BJ (cell line): ENCODE measurements at regions of chr7 and their contacts with region 1.

Region 1: GRCh38 chr7:6260291-6261187 is 11.9 kb downstream of the CYTH3 start:
- DNase-seq: no peak
- H3K4me3 ChIP-seq: no peak overlapping the region
- H3K27me3 ChIP-seq: no peaks in the 10 kb centered on the region
- CTCF ChIP-seq: no peak

Region 2: GRCh38 chr7:6175645-6176044 is 84.9 kb before region 1 on chr7:
- CTCF ChIA-PET with region 1: no interaction called
- POLR2A ChIA-PET with region 1: no interaction called
- DNase-seq: peak; percentile 47
- H3K4me3 ChIP-seq: no peak overlapping the region
- H3K27me3 ChIP-seq: no peaks in the 10 kb centered on the region
- CTCF ChIP-seq: no peak

Region 3: GRCh38 chr7:6271060-6271658 is 10.6 kb after region 1 on chr7:
- CTCF ChIA-PET with region 1: interaction called, 10 read pairs
- POLR2A ChIA-PET with region 1: interaction called, 13 read pairs
- DNase-seq: no peak
- H3K4me3 ChIP-seq: peak overlapping the region; percentile 95
- H3K27me3 ChIP-seq: no peaks in the 10 kb centered on the region
- CTCF ChIP-seq: peak; percentile 66

Region 4: GRCh38 chr7:6460303-6460702 is 199.8 kb after region 1 on chr7:
- CTCF ChIA-PET with region 1: no interaction called
- POLR2A ChIA-PET with region 1: interaction called, 13 read pairs
- DNase-seq: no peak
- H3K4me3 ChIP-seq: no peak overlapping the region
- H3K27me3 ChIP-seq: no peaks in the 10 kb centered on the region
- CTCF ChIP-seq: no peak